CD4-positive, alpha-beta T cell (primary cell): ENCODE measurements at regions of chr6 and their contacts with region 1.

Region 1: DNA sequence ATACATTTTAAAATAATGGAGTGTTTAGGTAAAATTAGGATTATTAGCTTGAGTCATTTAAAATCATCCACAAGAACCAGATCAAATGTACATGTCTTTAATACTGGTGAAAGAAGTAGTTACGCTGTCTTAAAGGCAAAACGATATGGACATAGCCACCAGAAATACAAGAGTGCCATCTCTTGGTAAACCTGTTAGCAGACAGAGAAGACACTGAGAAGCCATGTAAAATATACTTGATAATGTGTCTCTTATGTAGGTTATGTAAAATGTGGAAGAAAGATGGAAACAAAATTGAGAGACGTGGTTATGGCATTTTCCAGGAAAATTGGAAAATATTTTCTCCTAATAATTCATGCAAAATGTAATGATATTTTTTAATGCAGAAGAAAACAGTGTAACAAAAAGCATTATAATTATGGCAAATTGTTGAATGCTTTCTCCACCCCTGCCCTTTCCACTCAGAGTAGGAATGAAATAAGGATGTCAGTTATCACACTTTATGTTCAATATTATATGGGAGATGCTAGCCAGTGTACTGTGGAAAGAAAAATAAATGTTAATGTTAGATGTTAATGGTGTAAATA is 12.2 kb upstream of the SLC17A2 start:
- DNase-seq: peak in 3 of 14 experiments; percentile 54 to 70 (median 66)
- ATAC-seq: peak; percentile 49
- H3K4me3 ChIP-seq: no peak overlapping the region
- H3K4me3 Mint-ChIP-seq: no peak overlapping the region
- H3K27ac ChIP-seq: no peak overlapping the region
- H3K27ac Mint-ChIP-seq: no peak overlapping the region
- H3K4me1 ChIP-seq: peaks cover 8% of the 10 kb centered on the region
- H3K4me1 Mint-ChIP-seq: peaks cover 9% of the 10 kb centered on the region
- H3K27me3 ChIP-seq: no peaks in the 10 kb centered on the region
- H3K27me3 Mint-ChIP-seq: peaks cover 5% of the 10 kb centered on the region
- CTCF ChIP-seq: peak; percentile 57

Region 2: GRCh38 chr6:25556516-25556915 is 386.1 kb before region 1 on chr6:
- CTCF ChIA-PET with region 1: no interaction called
- POLR2A ChIA-PET with region 1: no interaction called
- intact Hi-C with region 1: loop called in 1 of 2 experiments (anchors 5 kb)
- DNase-seq: peak; percentile 60 to 85 (median 74)
- ATAC-seq: no peak
- H3K4me3 ChIP-seq: no peak overlapping the region
- H3K4me3 Mint-ChIP-seq: no peak overlapping the region
- H3K27ac ChIP-seq: no peak overlapping the region
- H3K27ac Mint-ChIP-seq: no peak overlapping the region
- H3K4me1 ChIP-seq: no peaks in the 10 kb centered on the region
- H3K4me1 Mint-ChIP-seq: no peaks in the 10 kb centered on the region
- H3K27me3 ChIP-seq: no peaks in the 10 kb centered on the region
- H3K27me3 Mint-ChIP-seq: no peaks in the 10 kb centered on the region
- CTCF ChIP-seq: peak; percentile 87

Region 3: GRCh38 chr6:25697537-25698345 is 244.9 kb before region 1 on chr6:
- CTCF ChIA-PET with region 1: no interaction called
- POLR2A ChIA-PET with region 1: no interaction called
- intact Hi-C with region 1: no loop called
- DNase-seq: peak in 1 of 14 experiments; percentile 3
- ATAC-seq: no peak
- H3K4me3 ChIP-seq: no peak overlapping the region
- H3K4me3 Mint-ChIP-seq: no peak overlapping the region
- H3K27ac ChIP-seq: no peak overlapping the region
- H3K27ac Mint-ChIP-seq: no peak overlapping the region
- H3K4me1 ChIP-seq: no peaks in the 10 kb centered on the region
- H3K4me1 Mint-ChIP-seq: no peaks in the 10 kb centered on the region
- H3K27me3 ChIP-seq: peaks cover 0 to 7% of the 10 kb centered on the region in 2 experiments
- H3K27me3 Mint-ChIP-seq: peaks cover 29% of the 10 kb centered on the region
- CTCF ChIP-seq: no peak

Region 4: GRCh38 chr6:25717866-25718740 is 224.6 kb before region 1 on chr6:
- CTCF ChIA-PET with region 1: interaction called, 3 read pairs
- POLR2A ChIA-PET with region 1: no interaction called
- intact Hi-C with region 1: loop called (anchors 1 to 2 kb)
- DNase-seq: peak in 3 of 14 experiments; percentile 22 to 39 (median 35)
- ATAC-seq: no peak
- H3K4me3 ChIP-seq: no peak overlapping the region
- H3K4me3 Mint-ChIP-seq: no peak overlapping the region
- H3K27ac ChIP-seq: no peak overlapping the region
- H3K27ac Mint-ChIP-seq: no peak overlapping the region
- H3K4me1 ChIP-seq: no peaks in the 10 kb centered on the region
- H3K4me1 Mint-ChIP-seq: no peaks in the 10 kb centered on the region
- H3K27me3 ChIP-seq: peaks cover 0 to 5% of the 10 kb centered on the region in 2 experiments
- H3K27me3 Mint-ChIP-seq: peaks cover 15% of the 10 kb centered on the region
- CTCF ChIP-seq: peak; percentile 59

Region 5: GRCh38 chr6:25788305-25788922 is 154.2 kb before region 1 on chr6:
- CTCF ChIA-PET with region 1: no interaction called
- POLR2A ChIA-PET with region 1: no interaction called
- intact Hi-C with region 1: loop called (anchors 1 to 2 kb)
- DNase-seq: peak in 13 of 14 experiments; percentile 2 to 68 (median 23)
- ATAC-seq: peak; percentile 48
- H3K4me3 ChIP-seq: no peak overlapping the region
- H3K4me3 Mint-ChIP-seq: no peak overlapping the region
- H3K27ac ChIP-seq: no peak overlapping the region
- H3K27ac Mint-ChIP-seq: no peak overlapping the region
- H3K4me1 ChIP-seq: no peaks in the 10 kb centered on the region
- H3K4me1 Mint-ChIP-seq: no peaks in the 10 kb centered on the region
- H3K27me3 ChIP-seq: no peaks in the 10 kb centered on the region
- H3K27me3 Mint-ChIP-seq: no peaks in the 10 kb centered on the region
- CTCF ChIP-seq: peak; percentile 39

Region 6: DNA sequence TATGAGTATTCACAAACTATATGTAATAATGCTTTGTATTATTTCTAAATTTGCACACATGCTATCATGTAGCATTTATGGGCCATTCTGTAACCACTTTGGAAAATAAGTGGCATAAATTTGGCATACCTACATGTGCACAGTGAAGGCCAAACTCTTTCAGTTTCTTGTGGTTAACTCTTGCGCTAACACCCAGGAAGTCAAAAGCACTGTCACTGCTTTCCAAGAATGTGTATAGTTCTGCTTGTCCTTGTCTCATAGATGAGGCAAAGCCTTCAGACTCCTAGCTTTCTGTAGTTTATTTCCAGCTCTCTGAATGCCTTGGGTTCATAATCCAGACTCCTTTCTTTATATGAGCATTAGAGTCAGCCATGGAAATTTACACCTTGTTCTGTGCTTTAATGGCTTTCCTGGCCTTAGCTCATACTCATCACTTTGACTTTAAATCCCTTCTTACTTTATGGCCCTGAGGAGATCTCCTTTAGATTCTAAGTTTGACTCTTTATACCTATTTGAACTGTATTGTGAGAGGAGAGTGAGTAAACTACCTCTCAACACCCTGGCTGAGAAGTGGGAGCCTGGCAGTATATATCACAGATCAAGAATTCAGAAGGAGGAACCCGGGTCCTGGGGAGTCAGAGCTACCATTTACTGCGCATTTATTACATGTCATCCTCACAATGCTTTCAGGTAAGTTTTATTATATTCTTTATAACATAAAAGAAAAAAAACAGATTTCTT is 67.7 kb before region 1 on chr6:
- CTCF ChIA-PET with region 1: no interaction called
- POLR2A ChIA-PET with region 1: no interaction called
- intact Hi-C with region 1: no loop called
- DNase-seq: peak in 3 of 14 experiments; percentile 23 to 65 (median 26)
- ATAC-seq: peak; percentile 51
- H3K4me3 ChIP-seq: no peak overlapping the region
- H3K4me3 Mint-ChIP-seq: no peak overlapping the region
- H3K27ac ChIP-seq: no peak overlapping the region
- H3K27ac Mint-ChIP-seq: no peak overlapping the region
- H3K4me1 ChIP-seq: peaks cover 29% of the 10 kb centered on the region
- H3K4me1 Mint-ChIP-seq: peaks cover 36% of the 10 kb centered on the region
- H3K27me3 ChIP-seq: no peaks in the 10 kb centered on the region
- H3K27me3 Mint-ChIP-seq: no peaks in the 10 kb centered on the region
- CTCF ChIP-seq: no peak

Region 7: GRCh38 chr6:25953733-25954132 is 11.1 kb after region 1 on chr6:
- CTCF ChIA-PET with region 1: no interaction called
- POLR2A ChIA-PET with region 1: no interaction called
- intact Hi-C with region 1: no loop called
- DNase-seq: no peak
- ATAC-seq: no peak
- H3K4me3 ChIP-seq: no peak overlapping the region
- H3K4me3 Mint-ChIP-seq: no peak overlapping the region
- H3K27ac ChIP-seq: no peak overlapping the region
- H3K27ac Mint-ChIP-seq: no peak overlapping the region
- H3K4me1 ChIP-seq: peaks cover 6% of the 10 kb centered on the region
- H3K4me1 Mint-ChIP-seq: peaks cover 7% of the 10 kb centered on the region
- H3K27me3 ChIP-seq: no peaks in the 10 kb centered on the region
- H3K27me3 Mint-ChIP-seq: peaks cover 5% of the 10 kb centered on the region
- CTCF ChIP-seq: no peak